A549 (cell line): ENCODE measurements at regions of chr22 and their contacts with region 1.

Region 1: GRCh38 chr22:30763815-30764686 is 69.4 kb downstream of the OSBP2 start:
- DNase-seq: peak; percentile 59 to 84
- ATAC-seq: peak; percentile 94
- H3K4me3 ChIP-seq: no peak overlapping the region
- H3K27ac ChIP-seq: peak overlapping the region; percentile 46 to 84
- H3K4me1 ChIP-seq: peaks cover 11% of the 10 kb centered on the region
- CTCF ChIP-seq: peak; percentile 81
- EP300 ChIP-seq: no peak
- POLR2A ChIP-seq: no peak
- RAD21 ChIP-seq: peak; percentile 90 to 93

Region 2: DNA sequence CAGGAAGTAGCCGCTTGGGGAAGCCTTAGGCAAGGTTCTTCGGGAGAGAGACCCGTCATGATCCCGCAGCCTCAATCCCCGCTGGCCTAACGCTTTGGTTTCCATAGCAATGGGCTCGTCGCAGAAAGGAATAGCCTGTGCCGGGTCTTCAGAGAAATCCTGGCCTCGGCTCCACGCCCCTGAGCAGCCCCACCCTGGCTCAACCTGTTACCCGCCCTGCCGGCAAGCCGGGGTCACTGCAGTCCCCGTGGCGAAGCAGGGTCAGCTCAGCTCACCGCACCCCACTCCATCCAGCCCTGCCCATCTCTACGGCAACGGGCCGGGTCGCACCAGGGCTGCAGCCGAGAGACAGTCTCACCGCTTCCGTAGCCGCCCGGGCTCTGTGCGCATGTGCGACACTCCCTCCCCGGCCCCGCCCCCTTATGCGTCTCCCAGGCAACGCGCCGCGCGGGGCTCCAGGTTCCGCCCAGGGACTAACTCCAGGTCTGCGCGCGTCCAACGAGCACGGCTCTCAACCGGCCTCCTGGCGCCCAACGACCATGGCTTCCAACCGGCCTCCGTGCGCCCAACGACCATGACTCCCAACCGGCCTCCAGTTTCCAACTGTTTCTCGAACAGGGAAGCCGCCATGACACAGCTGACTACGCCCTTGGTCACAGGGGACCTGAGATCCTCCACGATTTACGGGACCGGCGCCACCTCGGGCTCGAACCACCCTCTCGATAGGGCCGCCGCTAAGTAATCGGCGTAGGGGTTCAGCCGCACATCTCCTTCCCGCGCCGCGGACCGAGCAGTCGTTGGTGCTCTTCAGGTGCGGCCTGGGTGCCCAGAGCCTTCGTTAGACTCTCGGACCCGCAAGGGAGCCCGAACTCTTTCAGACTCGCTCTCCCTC is 96.3 kb before region 1 on chr22 and contains the start of gene DUSP18:
- CTCF ChIA-PET with region 1: no interaction called
- POLR2A ChIA-PET with region 1: no interaction called
- DNase-seq: peak; percentile 90 to 93
- ATAC-seq: peak; percentile 95 to 97
- H3K4me3 ChIP-seq: peak within 1 kb of the TSS; percentile 69
- H3K27ac ChIP-seq: peak within 1 kb of the TSS; percentile 69 to 88
- H3K4me1 ChIP-seq: peaks cover 6% of the 10 kb centered on the region; the same call in 1 of the 3 replicates
- CTCF ChIP-seq: no peak
- EP300 ChIP-seq: no peak
- POLR2A ChIP-seq: peak; percentile 63
- RAD21 ChIP-seq: no peak
- polyA plus RNA-seq, gene DUSP18: 7.2 and 8.4 TPM in 2 replicates

Region 3: GRCh38 chr22:30705710-30706651 is 58.1 kb before region 1 on chr22:
- CTCF ChIA-PET with region 1: no interaction called
- POLR2A ChIA-PET with region 1: no interaction called
- DNase-seq: no peak
- ATAC-seq: no peak
- H3K4me3 ChIP-seq: no peak overlapping the region
- H3K27ac ChIP-seq: no peak overlapping the region
- H3K4me1 ChIP-seq: peaks cover 7% of the 10 kb centered on the region; the same call in 2 of the 3 replicates
- CTCF ChIP-seq: no peak
- EP300 ChIP-seq: no peak
- POLR2A ChIP-seq: no peak
- RAD21 ChIP-seq: no peak

Region 4: DNA sequence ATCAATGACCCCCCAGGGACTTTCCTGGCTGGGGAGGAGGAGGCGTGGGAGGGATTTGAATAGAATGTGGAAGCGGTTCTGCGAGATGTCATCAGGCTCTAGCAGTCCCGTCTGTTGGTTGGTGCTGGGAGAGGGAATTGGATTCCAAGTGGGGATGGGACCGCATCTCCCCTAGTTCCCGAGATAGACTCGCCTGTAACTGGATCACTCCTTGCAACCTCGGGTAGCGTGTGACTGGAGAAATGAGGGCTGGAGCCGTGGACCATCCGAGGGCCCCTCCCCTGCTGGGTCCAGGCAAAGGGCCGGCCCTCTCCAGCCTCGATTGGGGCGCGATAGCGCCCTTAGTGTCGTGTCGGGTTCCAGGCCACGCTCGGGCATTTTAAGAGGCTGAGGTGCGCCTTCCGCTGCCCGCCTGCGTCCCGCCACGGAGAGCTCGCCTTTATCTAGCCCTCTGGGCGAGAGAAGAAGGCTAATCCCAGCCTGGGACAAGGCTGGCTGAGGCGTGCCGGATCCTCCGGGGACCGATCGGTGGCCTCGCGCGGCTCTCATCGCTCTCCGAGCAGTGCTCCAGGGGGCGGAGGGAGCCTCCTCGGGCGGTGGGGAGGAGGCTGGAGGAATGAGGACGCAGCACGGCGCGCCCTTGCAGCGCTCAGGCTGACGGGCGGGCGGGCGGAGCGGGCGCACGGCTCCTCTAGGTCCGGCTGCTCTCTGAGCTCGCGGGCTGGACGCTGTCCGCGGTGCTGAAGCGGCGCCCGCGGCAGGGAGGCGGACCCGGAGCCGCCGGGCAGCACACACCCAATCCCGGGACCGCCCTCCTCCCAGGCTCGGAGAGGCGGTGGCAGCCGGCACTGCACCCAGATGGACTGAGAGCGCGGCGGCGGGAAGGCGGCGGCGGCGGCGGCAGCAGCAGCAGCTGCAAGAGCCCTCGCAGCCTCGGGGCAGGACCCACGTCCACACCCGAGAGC is 38.4 kb after region 1 on chr22:
- CTCF ChIA-PET with region 1: interaction called, 10 read pairs
- POLR2A ChIA-PET with region 1: no interaction called
- DNase-seq: peak; percentile 46 to 83
- ATAC-seq: peak; percentile 97 to 99
- H3K4me3 ChIP-seq: peak overlapping the region; percentile 41
- H3K27ac ChIP-seq: peak overlapping the region in 1 of 2 experiments; percentile 78; a peak in 3 of 6 replicates
- H3K4me1 ChIP-seq: peaks cover 39% of the 10 kb centered on the region
- CTCF ChIP-seq: no peak
- EP300 ChIP-seq: no peak
- POLR2A ChIP-seq: no peak
- RAD21 ChIP-seq: 0 out of 5 replicates have a peak, but pooled peaks of 1 of the 2 experiments have one; percentile 31

Region 5: DNA sequence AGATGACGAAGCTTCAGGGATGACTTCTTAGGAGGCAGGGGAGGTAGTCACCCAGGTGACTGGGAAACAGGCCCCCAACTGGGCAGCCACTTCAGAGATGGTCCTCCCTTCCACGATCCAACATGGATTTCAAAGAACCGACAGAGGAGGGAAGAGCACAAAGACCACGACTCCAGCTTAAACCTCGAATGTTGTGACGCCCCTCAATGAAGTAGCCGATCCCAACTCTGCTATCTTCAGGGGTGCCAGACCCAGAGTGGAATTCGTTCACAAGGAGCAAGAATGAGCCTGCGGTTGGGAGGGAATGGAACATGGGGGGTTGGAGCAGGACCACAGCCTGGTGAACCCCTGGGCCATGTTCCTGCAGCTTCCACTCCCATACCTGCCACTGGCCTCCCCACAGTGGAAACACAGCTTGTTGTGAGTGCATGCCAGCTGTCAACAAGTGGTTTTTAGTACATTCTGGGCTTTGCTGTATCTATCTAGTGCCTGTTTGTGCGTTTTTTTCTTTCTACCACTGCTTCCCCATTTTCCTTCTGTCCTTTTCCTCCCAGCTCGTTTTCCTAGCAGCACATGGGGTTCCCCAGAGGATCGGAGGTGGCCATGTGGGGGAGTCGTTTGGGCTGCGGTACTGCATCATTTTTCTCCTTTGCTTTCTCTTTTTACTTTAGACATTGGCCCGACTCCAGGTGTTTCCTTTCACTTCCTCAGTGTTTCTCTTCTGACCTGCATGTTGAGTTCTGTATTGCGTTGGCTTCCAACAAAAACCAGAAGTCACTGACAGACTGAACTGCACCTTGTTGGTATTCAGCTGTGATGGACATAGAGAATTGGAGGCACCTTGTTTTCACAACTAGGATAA is 138.7 kb after region 1 on chr22:
- CTCF ChIA-PET with region 1: interaction called, 11 read pairs
- POLR2A ChIA-PET with region 1: no interaction called
- DNase-seq: no peak
- ATAC-seq: no peak
- H3K4me3 ChIP-seq: no peak overlapping the region
- H3K27ac ChIP-seq: no peak overlapping the region
- H3K4me1 ChIP-seq: no peaks in the 10 kb centered on the region
- CTCF ChIP-seq: no peak
- EP300 ChIP-seq: no peak
- POLR2A ChIP-seq: no peak
- RAD21 ChIP-seq: no peak

Region 6: DNA sequence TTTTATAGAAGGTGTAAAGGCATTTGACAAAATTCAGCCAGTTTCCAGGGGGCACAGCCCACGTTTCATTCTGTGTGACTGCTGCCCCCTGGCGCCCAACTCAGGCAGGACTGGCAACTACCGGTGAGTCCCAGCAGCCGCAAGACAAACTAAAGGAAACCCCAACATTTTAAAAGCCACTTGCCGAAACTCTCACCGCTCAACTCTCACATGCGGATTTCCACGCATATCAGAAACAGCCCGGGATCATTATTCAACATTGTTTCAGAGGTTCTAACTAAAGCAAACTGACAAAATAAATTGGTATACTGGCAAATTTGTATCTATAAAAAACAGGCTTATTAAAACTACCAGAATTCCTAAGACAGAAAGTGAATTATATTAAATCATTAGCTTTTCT is 156.4 kb after region 1 on chr22:
- CTCF ChIA-PET with region 1: interaction called, 138 read pairs
- POLR2A ChIA-PET with region 1: interaction called, 3 read pairs
- DNase-seq: peak; percentile 67 to 70
- ATAC-seq: peak; percentile 85 to 90
- H3K4me3 ChIP-seq: no peak overlapping the region
- H3K27ac ChIP-seq: peak overlapping the region; percentile 51 to 58; a peak in 3 of 6 replicates
- H3K4me1 ChIP-seq: peaks cover 14% of the 10 kb centered on the region; the same call in 1 of the 3 replicates
- CTCF ChIP-seq: peak; percentile 82
- EP300 ChIP-seq: no peak
- POLR2A ChIP-seq: no peak
- RAD21 ChIP-seq: peak; percentile 86

Region 7: DNA sequence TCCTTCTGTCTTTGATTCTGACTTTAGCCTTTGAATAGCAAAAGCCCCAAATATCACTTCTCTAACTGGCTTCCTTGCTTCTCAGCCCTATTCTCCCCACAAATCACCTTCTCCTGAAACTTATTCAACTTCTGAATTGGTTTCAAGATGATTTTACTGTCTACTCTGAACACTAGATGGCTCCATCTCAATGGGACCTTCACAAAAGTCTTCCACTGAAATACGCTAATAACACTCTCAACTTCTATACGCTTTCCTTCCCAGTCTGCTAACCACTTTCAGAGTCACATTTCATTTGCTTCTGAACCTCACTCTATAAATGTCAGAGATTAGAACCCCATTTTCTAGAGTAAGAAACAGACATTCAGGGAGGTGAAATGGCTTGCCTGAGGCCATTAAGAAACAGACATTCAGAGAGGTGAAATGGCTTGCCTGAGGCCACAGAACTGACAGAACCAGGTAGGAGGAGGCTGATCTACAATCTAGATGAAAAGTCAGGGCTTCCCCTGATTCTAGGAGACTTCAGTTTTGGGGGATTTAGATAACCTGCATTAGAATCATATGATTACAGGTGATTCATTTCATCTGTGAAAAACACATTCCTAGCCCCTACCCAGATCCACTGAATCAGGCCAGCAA is 183.9 kb after region 1 on chr22:
- CTCF ChIA-PET with region 1: interaction called, 16 read pairs
- POLR2A ChIA-PET with region 1: no interaction called
- DNase-seq: peak in 1 of 2 experiments; percentile 46
- ATAC-seq: peak; percentile 50 to 53; a peak in 2 of 6 replicates
- H3K4me3 ChIP-seq: no peak overlapping the region
- H3K27ac ChIP-seq: no peak overlapping the region
- H3K4me1 ChIP-seq: no peaks in the 10 kb centered on the region
- CTCF ChIP-seq: peak; percentile 59
- EP300 ChIP-seq: no peak
- POLR2A ChIP-seq: no peak
- RAD21 ChIP-seq: peak; percentile 57 to 67; a peak in 4 of 5 replicates